KBM-7 (cell line): ENCODE measurements at regions of chr20 and their contacts with region 1.

Region 1: DNA sequence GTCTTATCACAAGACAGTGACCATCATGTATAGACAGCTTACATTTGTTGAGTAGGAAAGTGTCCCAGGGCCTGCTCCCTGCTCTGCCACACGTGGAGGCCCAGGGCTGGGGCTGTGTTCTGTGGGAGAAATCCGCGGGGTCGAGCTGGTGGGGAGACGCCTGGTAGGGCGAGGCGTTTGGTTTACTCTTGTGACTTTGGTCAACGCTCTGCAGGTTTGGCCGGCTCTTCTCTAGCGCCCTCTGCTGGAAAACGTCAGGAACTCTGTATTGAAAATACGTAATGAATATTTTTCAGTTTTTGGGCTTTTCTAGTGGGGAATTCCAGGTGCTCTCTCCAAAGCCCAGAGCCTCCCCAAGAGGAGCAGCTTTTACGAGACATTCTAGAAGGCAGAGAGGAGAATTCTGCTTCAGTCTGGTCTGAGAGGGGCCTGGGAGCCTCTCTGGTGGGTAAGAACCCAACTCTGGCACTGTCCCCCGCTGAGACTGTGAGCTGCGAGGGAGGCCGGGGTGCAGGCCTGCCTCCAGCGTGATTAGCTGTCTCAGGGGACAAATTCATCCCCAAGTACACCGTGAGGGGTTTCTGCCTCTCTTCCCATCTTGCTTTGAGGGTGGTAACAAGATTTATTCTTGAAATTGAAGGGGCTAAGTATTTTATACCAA is 112.6 kb upstream of the RALGAPA2 start:
- DNase-seq: peak; percentile 60

Region 2: DNA sequence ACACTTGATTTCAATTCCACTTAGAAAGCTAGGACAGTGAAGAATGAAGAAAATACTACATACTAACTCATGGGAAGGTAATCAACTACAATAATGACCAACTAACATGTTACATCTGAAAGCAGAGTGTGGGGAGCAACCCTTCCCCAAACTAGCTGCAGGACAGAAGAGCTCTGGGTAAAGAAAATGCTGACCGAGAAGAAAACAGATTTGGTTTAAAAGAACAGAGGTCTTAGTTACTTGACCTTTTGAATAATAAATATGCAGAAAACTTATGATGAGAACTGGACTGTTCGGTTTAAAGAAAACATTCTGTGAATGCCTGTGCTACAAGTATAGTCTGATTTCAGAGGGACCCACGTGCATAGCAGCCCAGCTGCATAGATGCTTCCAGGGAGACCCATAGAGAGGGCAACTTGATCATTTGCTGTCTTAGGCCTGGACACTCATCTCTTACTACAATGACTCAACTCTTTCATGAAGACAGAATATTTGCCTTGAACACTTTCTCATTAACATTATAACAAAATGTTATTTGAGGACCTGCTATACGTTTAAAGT is 166.1 kb before region 1 on chr20:
- in situ Hi-C with region 1: loop called (anchors 10 kb)
- DNase-seq: no peak

Region 3: DNA sequence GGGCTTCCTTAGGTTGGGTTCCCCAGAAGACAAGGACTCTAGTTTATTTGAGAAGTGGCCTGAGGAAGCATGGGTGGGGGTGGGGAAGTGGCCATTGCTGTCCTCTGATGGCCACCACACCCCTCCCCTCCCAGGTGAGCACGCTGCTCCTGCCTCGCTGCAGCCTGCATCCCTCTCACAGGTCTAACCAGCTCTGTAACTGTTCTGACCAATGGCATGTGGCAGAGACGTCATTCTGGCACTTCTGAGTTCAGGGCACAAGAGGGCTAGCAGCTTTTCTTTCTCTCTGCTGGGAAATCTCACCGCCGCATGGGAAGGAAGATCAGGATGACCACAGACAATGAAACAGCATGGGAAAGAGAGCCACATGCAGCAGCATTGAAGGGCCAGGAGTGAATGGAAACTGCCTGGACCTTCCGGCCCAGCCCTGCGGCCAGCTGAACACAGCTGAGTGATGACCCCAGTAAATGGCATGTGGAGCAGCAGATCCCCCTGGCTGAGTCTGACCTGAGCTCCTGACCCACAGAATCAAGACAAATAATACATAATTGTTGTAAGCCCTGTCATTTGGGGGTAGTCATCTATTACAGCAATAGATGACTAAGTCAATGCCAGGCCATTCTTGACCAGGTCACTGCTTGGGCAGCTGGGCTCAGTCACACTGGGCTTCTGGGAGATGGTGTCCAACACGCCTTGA is 101.3 kb after region 1 on chr20:
- in situ Hi-C with region 1: no loop called
- DNase-seq: no peak